OCI-LY7 (cell line): ENCODE measurements at regions of chr6 and their contacts with region 1.

Region 1: GRCh38 chr6:157128235-157128775 is 195.0 kb downstream of the TMEM242 start:
- DNase-seq: no peak
- H3K4me3 ChIP-seq: no peak overlapping the region
- H3K27ac ChIP-seq: no peak overlapping the region
- H3K4me1 ChIP-seq: no peaks in the 10 kb centered on the region
- CTCF ChIP-seq: no peak

Region 2: GRCh38 chr6:157139054-157139708 is 10.9 kb after region 1 on chr6:
- CTCF ChIA-PET with region 1: interaction called, 3 read pairs
- POLR2A ChIA-PET with region 1: interaction called, 13 read pairs
- intact Hi-C with region 1: no loop called
- DNase-seq: peak; percentile 6
- H3K4me3 ChIP-seq: no peak overlapping the region
- H3K27ac ChIP-seq: no peak overlapping the region
- H3K4me1 ChIP-seq: no peaks in the 10 kb centered on the region
- CTCF ChIP-seq: peak; percentile 58

Region 3: GRCh38 chr6:157693867-157694266 is 565.6 kb after region 1 on chr6:
- CTCF ChIA-PET with region 1: no interaction called
- POLR2A ChIA-PET with region 1: no interaction called
- intact Hi-C with region 1: no loop called
- DNase-seq: no peak
- H3K4me3 ChIP-seq: no peak overlapping the region
- H3K27ac ChIP-seq: no peak overlapping the region
- H3K4me1 ChIP-seq: no peaks in the 10 kb centered on the region
- CTCF ChIP-seq: no peak